Activated CD4-positive, alpha-beta T cell treated with anti-CD3 and anti-CD28 coated beads, Interleukin-2, amount 10 ng/mL, durations not matched to agents 24 days and 14 days (primary cell): ENCODE measurements at regions of chr20 and their contacts with region 1.

Region 1: DNA sequence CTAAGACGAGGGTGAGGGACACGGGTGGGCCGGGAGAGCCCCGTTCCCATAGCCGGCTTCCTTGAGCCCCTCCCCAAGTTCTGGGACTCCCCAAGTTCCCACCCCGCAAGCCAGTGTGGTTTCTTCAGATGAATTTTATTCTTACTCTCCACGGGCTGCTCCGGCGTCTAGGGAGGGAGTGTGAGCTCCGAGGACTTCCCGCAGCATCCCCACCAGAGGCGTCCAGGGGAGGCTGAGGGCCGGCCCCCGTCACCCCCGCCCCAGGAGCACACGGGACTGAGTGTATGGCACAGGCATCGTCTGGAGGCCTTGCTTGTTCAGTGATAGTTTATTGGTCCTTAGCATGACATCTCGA is 10.0 kb upstream of the SLC4A11 start:
- DNase-seq: no peak
- H3K4me3 Mint-ChIP-seq: peak overlapping the region; percentile 54
- H3K27ac Mint-ChIP-seq: no peak overlapping the region
- H3K4me1 Mint-ChIP-seq: peaks cover 1% of the 10 kb centered on the region
- H3K27me3 Mint-ChIP-seq: peaks cover 29% of the 10 kb centered on the region

Region 2: DNA sequence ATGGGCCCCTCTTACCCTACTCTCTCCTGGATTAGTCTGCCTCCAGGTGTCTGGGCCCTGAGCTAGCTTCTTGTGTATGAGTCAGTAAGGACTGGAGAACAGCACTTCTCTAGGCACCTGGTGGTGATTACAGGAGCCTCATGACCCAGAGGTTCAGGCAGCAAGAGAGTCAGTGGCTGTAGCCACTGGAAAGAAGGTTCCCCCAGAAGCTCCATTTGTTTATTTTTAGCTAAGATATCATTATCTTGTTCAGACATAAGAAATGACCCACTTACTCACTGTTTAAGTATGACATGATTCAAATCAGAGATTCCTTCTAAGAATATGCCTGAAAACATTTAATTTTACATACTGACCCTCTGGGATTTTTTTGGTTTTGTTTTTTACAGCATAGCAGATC is 13.6 kb after region 1 on chr20:
- intact Hi-C with region 1: loop called (anchors 1 kb)
- DNase-seq: no peak
- H3K4me3 Mint-ChIP-seq: no peak overlapping the region
- H3K27ac Mint-ChIP-seq: no peak overlapping the region
- H3K4me1 Mint-ChIP-seq: no peaks in the 10 kb centered on the region
- H3K27me3 Mint-ChIP-seq: no peaks in the 10 kb centered on the region